ENCODE measurements at regions of chr5 and their contacts with region 1.

Region 1: GRCh38 chr5:39555788-39556187 is 131.0 kb upstream of the DAB2 start:
- DNase-seq: no peak
- H3K4me3 ChIP-seq: no peak overlapping the region
- H3K27ac ChIP-seq: no peak overlapping the region
- H3K4me1 ChIP-seq: no peaks in the 10 kb centered on the region
- H3K27me3 ChIP-seq: no peaks in the 10 kb centered on the region
- CTCF ChIP-seq: no peak
- EP300 ChIP-seq: no peak
- POLR2A ChIP-seq: no peak

Region 2: DNA sequence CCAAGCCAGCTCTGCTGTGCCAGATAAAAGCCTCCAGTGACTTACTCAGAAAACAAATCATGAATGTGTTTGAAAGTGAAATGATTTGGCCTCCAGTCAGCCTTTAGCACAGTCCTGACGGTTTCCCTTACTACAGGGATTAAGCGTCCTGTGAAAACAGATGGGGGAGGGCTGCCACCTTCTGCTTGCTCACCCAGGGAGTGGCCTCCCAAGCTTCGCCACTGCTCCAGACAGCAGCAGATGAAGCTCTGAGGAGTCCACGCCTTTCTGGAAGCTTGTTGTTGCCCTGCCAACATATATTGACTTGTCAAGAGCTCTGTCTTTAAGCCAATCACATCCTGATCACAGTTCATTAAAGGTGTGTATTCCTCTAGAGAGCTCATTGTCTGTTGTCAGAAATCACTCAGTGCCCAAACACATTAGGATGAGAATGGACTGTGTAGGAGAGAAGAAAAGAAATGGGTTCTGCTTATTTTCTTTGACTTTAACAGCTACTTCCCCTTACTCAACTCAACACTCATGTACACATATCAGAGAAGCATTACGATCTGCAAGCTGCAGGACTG is 331.5 kb before region 1 on chr5:
- in situ Hi-C with region 1: loop called (anchors 5 to 10 kb)
- intact Hi-C with region 1: no loop called
- DNase-seq: peak; percentile 82
- H3K4me3 ChIP-seq: no peak overlapping the region
- H3K27ac ChIP-seq: peak overlapping the region; percentile 48 to 67 (median 62)
- H3K4me1 ChIP-seq: peaks cover 0 to 29% (median 15%) of the 10 kb centered on the region in 4 donors
- H3K27me3 ChIP-seq: no peaks in the 10 kb centered on the region
- CTCF ChIP-seq: no peak
- EP300 ChIP-seq: no peak
- POLR2A ChIP-seq: no peak

Region 3: DNA sequence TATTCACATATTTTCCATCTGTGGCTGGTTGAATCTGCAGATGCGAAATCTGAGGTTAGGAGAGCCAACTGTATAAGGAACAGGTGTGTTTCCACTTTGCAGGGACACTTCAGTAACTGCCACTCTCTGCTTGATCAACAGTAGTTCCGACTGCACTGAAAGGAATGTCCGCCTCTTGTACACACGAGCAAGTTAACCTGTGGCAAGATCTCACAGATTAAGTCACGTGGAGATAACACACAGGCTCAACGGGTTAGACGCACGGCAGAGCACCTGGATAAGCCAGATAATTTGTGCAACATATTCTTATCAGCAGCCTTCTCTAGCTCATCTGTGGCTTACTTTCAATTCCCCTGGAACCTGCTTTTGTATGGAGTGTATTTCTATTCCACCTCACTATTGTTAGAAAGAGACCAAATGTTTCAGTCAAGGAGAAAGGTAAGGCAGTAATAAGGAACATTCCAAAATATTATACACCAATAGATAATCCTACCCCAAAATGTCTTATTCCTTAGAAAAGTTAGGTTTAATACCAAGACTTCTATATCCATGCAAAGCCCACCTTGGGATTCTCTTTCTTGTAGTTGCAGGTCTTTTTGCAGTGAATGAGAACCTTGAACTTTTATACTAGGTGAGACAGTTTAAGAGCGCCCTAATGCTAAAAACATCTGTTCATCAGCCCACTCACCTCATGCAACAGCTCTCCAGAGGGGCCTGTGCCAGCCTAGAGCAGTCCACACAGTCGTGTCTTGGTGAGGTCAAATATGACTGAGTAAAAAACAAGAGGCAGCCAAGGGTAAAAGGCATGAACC is 185.0 kb before region 1 on chr5:
- in situ Hi-C with region 1: loop called in 1 of 4 experiments (anchors 5 kb)
- intact Hi-C with region 1: no loop called
- DNase-seq: peak; percentile 47
- H3K4me3 ChIP-seq: no peak overlapping the region
- H3K27ac ChIP-seq: no peak overlapping the region
- H3K4me1 ChIP-seq: peaks cover 0 to 13% (median 6%) of the 10 kb centered on the region in 4 donors
- H3K27me3 ChIP-seq: no peaks in the 10 kb centered on the region
- CTCF ChIP-seq: no peak
- EP300 ChIP-seq: no peak
- POLR2A ChIP-seq: no peak

Measured in transverse colon (tissue), 4 donors.